ACHN (cell line): ENCODE measurements at regions of chr2 and their contacts with region 1.

Region 1: GRCh38 chr2:88669371-88670214 is 21.9 kb upstream of the RPIA start:
- DNase-seq: peak; percentile 61

Region 2: DNA sequence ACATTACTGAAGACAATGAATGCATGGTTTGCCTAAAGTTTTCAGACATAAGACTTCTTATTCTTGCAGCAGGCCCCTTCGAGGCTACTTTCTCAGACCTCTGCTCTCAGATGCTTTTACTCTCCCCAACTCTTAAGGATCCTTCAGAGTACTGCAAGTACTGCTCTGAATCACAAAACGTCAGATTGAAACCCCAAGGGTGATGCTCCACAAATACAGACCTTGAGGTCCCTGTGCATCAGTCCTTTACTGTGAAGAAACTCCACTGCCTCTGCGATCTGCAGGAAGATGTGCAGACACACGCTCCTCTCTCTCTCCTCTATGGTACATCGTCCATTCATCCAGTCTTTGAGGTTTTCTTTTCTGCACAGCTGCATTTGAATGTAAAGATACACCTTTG is 95.1 kb before region 1 on chr2:
- in situ Hi-C with region 1: loop called (anchors 10 kb)
- DNase-seq: no peak